ENCODE measurements at regions of chr7 and their contacts with region 1.

Region 1: DNA sequence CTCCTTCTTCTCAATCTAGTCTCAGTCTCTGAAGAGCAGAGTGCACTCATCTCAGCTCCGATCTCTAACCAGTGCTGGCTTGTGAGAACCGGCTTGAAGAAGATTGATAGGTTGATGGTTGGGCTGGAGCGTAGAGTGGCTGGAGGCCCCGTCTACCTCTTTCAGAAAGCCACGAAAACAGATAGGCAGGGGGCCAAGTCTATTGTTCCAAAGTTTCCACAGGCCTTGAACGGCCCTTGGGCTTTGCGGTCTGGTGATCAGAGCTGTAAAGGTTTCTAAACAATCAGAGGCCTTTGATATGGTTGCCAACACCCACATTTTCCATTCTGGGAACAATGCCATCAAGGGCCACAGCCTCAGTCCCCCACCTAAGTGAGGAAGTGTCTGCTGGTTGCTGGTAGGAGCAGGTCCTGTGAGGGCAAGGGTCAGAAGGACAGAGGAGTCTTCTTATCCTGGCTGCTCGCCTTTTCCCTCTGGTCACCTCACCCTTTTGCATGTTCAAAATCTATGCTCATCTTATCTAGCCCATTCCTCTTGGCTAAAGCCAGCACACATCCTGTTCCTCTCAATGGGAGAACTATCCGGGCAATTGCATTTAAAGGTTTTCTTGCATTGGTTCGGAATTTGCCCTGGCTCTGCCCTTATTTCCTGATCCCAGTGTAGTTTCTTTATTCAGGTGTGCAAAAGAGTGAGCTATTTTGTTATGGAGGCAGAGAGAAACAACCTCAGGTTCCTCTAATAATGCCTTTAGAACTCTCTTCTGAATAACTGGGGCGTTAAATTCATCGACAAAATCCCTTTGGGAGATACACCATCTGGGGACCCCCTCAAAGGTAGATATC is 70.3 kb upstream of the KMT2E start:
- DNase-seq: peak; percentile 68
- H3K4me3 ChIP-seq: no peak overlapping the region
- H3K27ac ChIP-seq: peak overlapping the region; percentile 98
- H3K4me1 ChIP-seq: peaks cover 33% of the 10 kb centered on the region
- H3K27me3 ChIP-seq: no peaks in the 10 kb centered on the region
- CTCF ChIP-seq: no peak

Region 2: GRCh38 chr7:104960741-104961448 is 17.2 kb after region 1 on chr7:
- CTCF ChIA-PET with region 1: no interaction called
- dilution Hi-C with region 1: no loop called
- in situ Hi-C with region 1: no loop called
- intact Hi-C with region 1: loop called (anchors 1 kb)
- DNase-seq: peak; percentile 83
- H3K4me3 ChIP-seq: no peak overlapping the region
- H3K27ac ChIP-seq: peak overlapping the region; percentile 16
- H3K4me1 ChIP-seq: peaks cover 53% of the 10 kb centered on the region
- H3K27me3 ChIP-seq: no peaks in the 10 kb centered on the region
- CTCF ChIP-seq: no peak

Region 3: DNA sequence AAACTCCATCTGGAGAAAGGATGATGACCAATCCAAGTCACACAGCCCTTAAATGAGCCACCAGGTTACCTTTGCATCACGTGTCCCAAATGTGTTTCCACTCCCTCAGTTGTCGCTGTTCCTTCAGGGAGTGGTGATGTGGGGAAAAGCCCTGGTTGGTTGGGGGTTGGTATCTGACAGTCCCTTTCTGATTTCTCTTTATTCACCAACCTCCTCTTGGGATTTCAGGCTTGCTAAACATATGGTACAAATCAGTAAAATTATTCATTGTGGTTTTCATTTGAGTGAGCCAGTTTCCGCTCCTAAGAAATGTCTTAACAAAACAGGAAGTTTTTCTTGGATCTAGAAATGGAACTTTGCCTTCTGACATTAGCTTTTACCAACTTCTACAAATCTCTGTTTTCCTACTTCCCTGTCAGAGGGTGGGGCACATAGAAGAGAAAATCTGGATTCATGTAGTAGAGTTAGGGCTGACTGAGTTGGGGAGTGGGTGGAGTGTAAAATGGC is 30.2 kb after region 1 on chr7:
- CTCF ChIA-PET with region 1: no interaction called
- dilution Hi-C with region 1: no loop called
- in situ Hi-C with region 1: no loop called
- intact Hi-C with region 1: loop called (anchors 1 kb)
- DNase-seq: peak; percentile 68
- H3K4me3 ChIP-seq: no peak overlapping the region
- H3K27ac ChIP-seq: peak overlapping the region; percentile 69
- H3K4me1 ChIP-seq: peaks cover 38% of the 10 kb centered on the region
- H3K27me3 ChIP-seq: no peaks in the 10 kb centered on the region
- CTCF ChIP-seq: no peak